ENCODE measurements at regions of chr17 and their contacts with region 1.

Region 1: DNA sequence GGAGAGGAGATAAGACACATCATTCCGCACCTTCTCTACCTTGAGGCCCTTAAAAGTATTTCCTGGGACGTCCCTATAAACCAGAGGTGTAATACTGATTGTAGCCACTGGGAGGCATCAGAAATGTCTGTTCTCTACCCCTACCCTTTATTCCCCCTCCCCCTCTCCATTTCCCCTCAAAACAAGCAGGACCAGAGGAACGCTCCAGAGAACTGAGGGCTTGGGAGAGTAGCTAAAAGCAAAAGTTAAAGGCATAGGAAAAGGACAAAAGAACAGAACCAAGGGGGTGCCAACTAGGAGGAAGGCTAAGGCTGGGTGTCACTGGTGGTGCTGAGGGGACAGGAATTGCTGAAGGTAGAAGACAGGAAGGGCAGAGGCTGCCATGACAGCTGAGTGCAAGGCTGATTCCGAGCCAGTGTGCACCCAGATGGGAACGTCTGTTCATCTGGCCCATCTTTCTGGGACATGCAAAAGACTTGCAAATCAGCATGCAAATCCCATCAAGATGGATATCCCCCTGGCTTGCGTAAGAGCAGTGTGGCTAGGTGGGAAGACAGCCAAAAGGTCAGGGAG is 6.7 kb downstream of the CAMTA2 start:
- DNase-seq: peak in 4 of 9 experiments; percentile 50 to 80 (median 67)
- ATAC-seq: peak; percentile 98
- H3K4me3 ChIP-seq: no peak overlapping the region
- H3K4me3 Mint-ChIP-seq: peak overlapping the region; percentile 23
- H3K27ac ChIP-seq: no peak overlapping the region
- H3K27ac Mint-ChIP-seq: no peak overlapping the region
- H3K4me1 ChIP-seq: peaks cover 9% of the 10 kb centered on the region
- H3K4me1 Mint-ChIP-seq: peaks cover 19% of the 10 kb centered on the region
- H3K27me3 ChIP-seq: no peaks in the 10 kb centered on the region
- H3K27me3 Mint-ChIP-seq: no peaks in the 10 kb centered on the region
- CTCF ChIP-seq: peak; percentile 87

Region 2: GRCh38 chr17:5019475-5019956 is 38.8 kb after region 1 on chr17:
- CTCF ChIA-PET with region 1: interaction called, 7 read pairs
- POLR2A ChIA-PET with region 1: no interaction called
- intact Hi-C with region 1: loop called (anchors 1 to 2 kb)
- DNase-seq: peak in 8 of 9 experiments; percentile 32 to 68 (median 52)
- ATAC-seq: peak; percentile 95
- H3K4me3 ChIP-seq: no peak overlapping the region
- H3K4me3 Mint-ChIP-seq: no peak overlapping the region
- H3K27ac ChIP-seq: no peak overlapping the region
- H3K27ac Mint-ChIP-seq: peak overlapping the region; percentile 75
- H3K4me1 ChIP-seq: no peaks in the 10 kb centered on the region
- H3K4me1 Mint-ChIP-seq: peaks cover 7% of the 10 kb centered on the region
- H3K27me3 ChIP-seq: no peaks in the 10 kb centered on the region
- H3K27me3 Mint-ChIP-seq: no peaks in the 10 kb centered on the region
- CTCF ChIP-seq: no peak

Region 3: GRCh38 chr17:5055543-5055942 is 74.8 kb after region 1 on chr17:
- CTCF ChIA-PET with region 1: interaction called, 63 read pairs
- POLR2A ChIA-PET with region 1: no interaction called
- intact Hi-C with region 1: no loop called
- DNase-seq: no peak
- ATAC-seq: no peak
- H3K4me3 ChIP-seq: no peak overlapping the region
- H3K4me3 Mint-ChIP-seq: no peak overlapping the region
- H3K27ac ChIP-seq: no peak overlapping the region
- H3K27ac Mint-ChIP-seq: no peak overlapping the region
- H3K4me1 ChIP-seq: no peaks in the 10 kb centered on the region
- H3K4me1 Mint-ChIP-seq: peaks cover under 1% of the 10 kb centered on the region
- H3K27me3 ChIP-seq: no peaks in the 10 kb centered on the region
- H3K27me3 Mint-ChIP-seq: no peaks in the 10 kb centered on the region
- CTCF ChIP-seq: no peak

Region 4: DNA sequence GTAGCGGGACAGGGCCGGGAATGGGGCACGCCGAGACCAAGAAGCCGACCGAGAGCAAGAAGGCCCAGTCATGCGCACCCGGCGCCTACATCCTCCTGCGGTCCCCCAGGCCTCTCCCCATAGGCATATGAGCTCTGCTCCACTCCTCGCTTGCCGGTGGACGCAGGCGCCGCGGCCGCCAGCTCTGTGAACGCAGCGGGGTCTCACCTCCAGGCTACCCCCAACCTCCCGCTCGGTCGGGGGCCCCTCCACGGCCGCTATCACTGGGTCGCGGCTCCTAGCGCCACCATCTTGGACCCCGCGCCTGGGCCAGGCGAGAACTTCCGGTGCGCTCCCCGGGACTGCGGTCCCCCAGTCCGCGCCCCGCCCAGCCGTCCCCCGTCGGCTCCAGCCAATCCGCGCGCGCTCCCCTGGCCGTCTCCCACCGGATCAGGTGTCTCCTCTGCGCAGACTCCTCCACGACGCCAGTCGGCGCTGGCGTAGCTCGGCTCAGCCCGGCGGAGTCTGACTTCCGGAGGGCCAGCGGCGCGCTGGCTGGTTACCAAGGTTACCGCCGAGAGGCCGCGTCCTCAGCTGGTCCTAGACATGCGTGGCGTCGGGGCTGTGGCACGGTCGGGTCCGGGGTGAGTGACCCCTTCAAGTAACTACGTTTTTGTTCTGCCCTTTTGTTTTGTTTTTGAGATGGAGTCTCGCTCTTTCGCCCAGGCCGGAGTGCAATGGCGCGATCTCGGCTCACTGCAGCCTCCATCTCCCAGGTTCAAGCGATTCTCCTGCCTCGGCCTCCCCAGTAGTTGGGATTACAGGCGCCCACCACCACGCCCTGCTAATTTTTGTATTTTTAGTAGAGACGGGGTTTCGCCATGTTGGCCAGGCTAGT is 211.0 kb after region 1 on chr17 and contains the start of gene ZNF594:
- CTCF ChIA-PET with region 1: no interaction called
- POLR2A ChIA-PET with region 1: no interaction called
- intact Hi-C with region 1: no loop called
- DNase-seq: peak; percentile 96 to 99 (median 98)
- ATAC-seq: peak; percentile 99
- H3K4me3 ChIP-seq: peak within 1 kb of the TSS; percentile 79 to 91
- H3K4me3 Mint-ChIP-seq: peak within 1 kb of the TSS; percentile 93
- H3K27ac ChIP-seq: peak within 1 kb of the TSS; percentile 77 to 88
- H3K27ac Mint-ChIP-seq: peak within 1 kb of the TSS; percentile 93
- H3K4me1 ChIP-seq: peaks cover 21% of the 10 kb centered on the region
- H3K4me1 Mint-ChIP-seq: peaks cover 31% of the 10 kb centered on the region
- H3K27me3 ChIP-seq: no peaks in the 10 kb centered on the region
- H3K27me3 Mint-ChIP-seq: no peaks in the 10 kb centered on the region
- CTCF ChIP-seq: peak; percentile 68
- total RNA-seq, gene ZNF594: 3.2 to 3.3 TPM

Measured in CD8-positive, alpha-beta T cell (primary cell).